A673 (cell line): ENCODE measurements at regions of chr4 and their contacts with region 1.

Region 1: DNA sequence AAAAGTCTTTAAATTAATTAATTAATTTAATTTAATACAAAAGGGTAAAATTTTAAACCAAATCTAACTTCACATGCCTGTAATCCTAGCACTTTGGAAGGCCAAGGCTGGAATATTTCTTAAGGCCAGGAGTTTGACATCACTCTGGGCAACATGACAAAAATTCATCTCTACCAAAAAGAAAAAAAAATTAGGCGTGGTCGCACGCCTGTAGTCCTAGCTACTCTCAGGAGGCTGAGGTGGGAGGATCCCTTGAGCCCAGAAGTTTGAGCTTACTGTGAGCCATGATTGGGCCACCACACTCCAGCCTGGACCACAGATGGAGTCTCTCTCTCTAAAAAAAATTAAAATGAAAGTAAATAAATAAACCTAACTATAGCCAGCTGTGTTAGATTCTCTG is 39.2 kb upstream of the ANTXR2 start:
- DNase-seq: no peak
- H3K4me3 ChIP-seq: no peak overlapping the region
- H3K27ac ChIP-seq: no peak overlapping the region
- H3K4me1 ChIP-seq: no peaks in the 10 kb centered on the region
- H3K27me3 ChIP-seq: no peaks in the 10 kb centered on the region
- CTCF ChIP-seq: no peak

Region 2: GRCh38 chr4:79979785-79980437 is 132.3 kb before region 1 on chr4:
- CTCF ChIA-PET with region 1: no interaction called
- POLR2A ChIA-PET with region 1: interaction called, 14 read pairs
- intact Hi-C with region 1: no loop called
- DNase-seq: no peak
- H3K4me3 ChIP-seq: no peak overlapping the region
- H3K27ac ChIP-seq: no peak overlapping the region
- H3K4me1 ChIP-seq: no peaks in the 10 kb centered on the region
- H3K27me3 ChIP-seq: no peaks in the 10 kb centered on the region
- CTCF ChIP-seq: no peak